Activated CD4-positive, alpha-beta T cell treated with anti-CD3 and anti-CD28 coated beads for 36 hours (primary cell): ENCODE measurements at regions of chr6 and their contacts with region 1.

Region 1: DNA sequence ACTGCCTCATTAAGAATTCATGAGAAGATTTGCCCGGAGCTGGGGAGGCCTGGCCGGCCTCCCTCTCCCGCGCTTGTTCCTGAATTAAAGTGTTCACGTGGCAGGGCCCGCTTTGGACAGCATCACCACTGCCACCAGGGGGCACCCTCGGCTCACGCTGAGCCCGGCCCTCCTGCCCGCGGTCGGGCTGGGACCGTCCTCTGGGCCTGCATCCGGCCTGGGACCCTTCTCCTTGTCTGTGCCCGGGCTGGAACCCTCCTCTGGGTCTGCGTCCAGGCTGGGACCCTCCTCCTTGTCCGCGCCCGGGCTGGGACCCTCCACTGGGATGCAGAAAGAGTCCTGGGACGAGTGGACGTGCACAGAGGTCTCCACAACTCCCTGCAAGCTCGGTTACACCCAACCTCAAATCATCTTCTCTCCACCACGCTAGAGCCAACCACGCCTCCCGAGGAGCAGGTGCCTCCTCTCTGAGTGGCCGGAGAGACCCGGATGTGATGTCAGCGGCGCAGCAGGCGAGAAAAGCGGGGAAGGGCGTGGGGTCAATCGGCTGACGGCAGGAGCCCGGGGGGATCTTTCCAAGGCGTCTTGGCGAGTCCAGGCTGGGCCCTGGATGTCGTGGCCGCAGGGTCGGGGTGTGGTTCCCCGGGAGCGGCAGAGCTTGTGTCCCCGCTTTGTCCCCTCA is 50.9 kb upstream of the DACT2 start:
- DNase-seq: peak; percentile 84
- ATAC-seq: peak; percentile 90
- H3K4me3 Mint-ChIP-seq: no peak overlapping the region
- H3K27ac Mint-ChIP-seq: no peak overlapping the region
- H3K4me1 Mint-ChIP-seq: peaks cover 5% of the 10 kb centered on the region
- H3K27me3 Mint-ChIP-seq: peaks cover 6% of the 10 kb centered on the region

Region 2: DNA sequence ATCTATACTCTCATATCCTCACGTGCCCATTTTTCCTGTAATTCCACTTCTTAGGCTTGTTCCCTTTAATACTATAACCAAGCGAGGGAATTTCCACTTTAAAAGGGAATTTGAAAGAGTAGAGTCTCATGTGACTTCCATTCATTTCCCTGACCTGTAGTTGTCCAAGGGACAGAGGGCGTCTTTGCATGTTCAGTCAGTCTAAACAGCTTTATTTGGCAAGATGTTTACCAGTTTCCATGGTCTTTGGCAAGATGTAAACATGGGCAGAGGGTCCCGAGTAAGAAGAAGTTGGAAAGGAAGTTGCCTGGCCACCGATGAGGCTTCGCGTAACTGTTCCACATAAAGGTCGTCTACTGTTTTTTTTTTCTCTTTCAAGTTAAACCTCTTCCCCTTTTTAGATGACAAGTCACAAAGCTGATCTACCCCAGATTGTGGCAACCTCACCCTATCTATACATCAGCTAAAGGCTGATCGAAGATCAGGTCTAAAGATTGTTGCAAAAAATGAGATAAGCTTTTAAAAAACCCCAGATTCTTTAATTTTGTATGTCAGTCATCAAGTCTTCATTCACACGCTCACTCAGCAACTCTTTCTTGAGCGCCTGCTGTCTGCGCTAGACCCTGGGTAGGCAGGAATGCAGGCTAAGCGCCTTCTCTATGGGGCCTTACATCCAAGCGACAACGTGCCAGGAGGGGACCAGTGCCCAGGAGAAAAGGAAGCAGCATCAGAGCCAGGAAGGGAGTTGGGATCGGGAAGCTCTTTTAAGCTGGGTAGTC is 1279.2 kb before region 1 on chr6:
- CTCF ChIA-PET with region 1: no interaction called
- POLR2A ChIA-PET with region 1: no interaction called
- intact Hi-C with region 1: no loop called
- DNase-seq: no peak
- ATAC-seq: no peak
- H3K4me3 Mint-ChIP-seq: peak overlapping the region; percentile 6
- H3K27ac Mint-ChIP-seq: peak overlapping the region; percentile 43
- H3K4me1 Mint-ChIP-seq: peaks cover 56% of the 10 kb centered on the region
- H3K27me3 Mint-ChIP-seq: no peaks in the 10 kb centered on the region

Region 3: GRCh38 chr6:168583821-168584220 is 213.4 kb after region 1 on chr6:
- CTCF ChIA-PET with region 1: no interaction called
- POLR2A ChIA-PET with region 1: no interaction called
- intact Hi-C with region 1: no loop called
- DNase-seq: no peak
- ATAC-seq: no peak
- H3K4me3 Mint-ChIP-seq: no peak overlapping the region
- H3K27ac Mint-ChIP-seq: no peak overlapping the region
- H3K4me1 Mint-ChIP-seq: no peaks in the 10 kb centered on the region
- H3K27me3 Mint-ChIP-seq: no peaks in the 10 kb centered on the region

Region 4: DNA sequence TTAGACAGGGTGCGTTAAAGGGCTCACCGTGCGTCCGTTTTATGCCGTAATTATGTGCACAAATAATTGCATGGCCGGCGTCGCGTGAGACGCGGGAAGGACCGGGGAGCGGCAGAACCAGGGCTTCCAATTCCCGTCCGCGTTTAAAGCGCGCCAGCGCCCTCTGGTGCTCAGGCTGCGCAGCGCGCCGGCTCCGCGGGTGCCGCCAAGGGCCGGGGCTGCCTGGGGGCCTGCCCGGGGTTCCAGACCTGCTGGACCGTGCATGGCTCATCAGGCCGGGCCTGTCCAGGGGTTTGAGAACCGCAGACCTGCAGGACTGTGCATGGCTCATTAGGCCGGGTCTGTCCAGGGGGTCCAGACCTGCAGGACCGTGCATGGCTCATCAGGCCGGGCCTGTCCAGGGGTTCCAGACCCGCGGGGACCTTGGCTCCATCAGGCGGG is 514.2 kb after region 1 on chr6:
- CTCF ChIA-PET with region 1: interaction called, 15 read pairs
- POLR2A ChIA-PET with region 1: no interaction called
- intact Hi-C with region 1: loop called (anchors 1 kb)
- DNase-seq: peak; percentile 86
- ATAC-seq: peak; percentile 94
- H3K4me3 Mint-ChIP-seq: peak overlapping the region; percentile 50
- H3K27ac Mint-ChIP-seq: peak overlapping the region; percentile 30
- H3K4me1 Mint-ChIP-seq: peaks cover 12% of the 10 kb centered on the region
- H3K27me3 Mint-ChIP-seq: peaks cover 2% of the 10 kb centered on the region